Caco-2 (cell line): ENCODE measurements at regions of chr17 and their contacts with region 1.

Region 1: GRCh38 chr17:57783106-57783742 is 38.1 kb upstream of the CCDC182 start:
- DNase-seq: peak; percentile 70 to 85
- H3K4me3 ChIP-seq: no peak overlapping the region
- H3K4me3 Mint-ChIP-seq: no peak overlapping the region
- H3K27ac Mint-ChIP-seq: no peak overlapping the region
- H3K4me1 ChIP-seq: no peaks in the 10 kb centered on the region
- H3K4me1 Mint-ChIP-seq: no peaks in the 10 kb centered on the region
- H3K27me3 ChIP-seq: peaks cover 2% of the 10 kb centered on the region; the same call in 1 of the 2 replicates
- H3K27me3 Mint-ChIP-seq: peaks cover 17% of the 10 kb centered on the region
- CTCF ChIP-seq: peak; percentile 84 to 87

Region 2: DNA sequence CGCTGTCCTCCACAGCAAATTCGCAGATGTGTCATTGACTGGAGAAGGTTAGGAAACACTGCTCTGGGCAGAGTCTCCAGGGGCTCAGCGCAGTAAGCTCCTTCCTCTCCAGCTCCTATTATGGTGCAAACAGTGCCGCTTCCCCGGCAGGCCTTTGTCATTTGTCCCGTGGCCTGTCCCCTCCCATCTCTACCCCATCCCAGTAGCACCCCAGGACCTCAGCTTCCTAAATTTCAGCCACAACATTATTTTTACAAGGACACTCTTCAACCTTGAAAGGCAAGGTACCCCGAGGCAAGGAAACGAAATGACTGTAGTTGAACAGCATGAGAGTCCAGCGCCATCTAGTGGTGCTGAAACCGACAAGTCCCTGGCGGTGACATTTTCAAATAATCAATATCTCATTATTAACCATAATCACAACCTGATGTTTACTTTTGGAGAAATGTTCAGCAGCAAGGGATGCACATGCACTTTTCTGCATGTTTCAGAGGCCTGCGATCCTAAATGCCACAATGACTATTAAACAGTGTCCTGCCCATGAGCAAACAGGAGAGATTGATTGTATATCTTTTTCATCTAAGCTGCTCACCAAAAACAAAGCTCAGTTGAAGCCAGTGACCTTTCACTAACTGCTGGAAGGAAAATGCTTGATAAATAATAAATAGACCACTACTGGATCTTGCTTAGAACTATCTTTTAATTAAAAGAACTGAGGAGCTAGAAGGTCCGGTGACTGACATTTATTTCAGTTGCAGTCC is 50.1 kb after region 1 on chr17:
- CTCF ChIA-PET with region 1: interaction called, 12 read pairs
- POLR2A ChIA-PET with region 1: no interaction called
- intact Hi-C with region 1: no loop called
- DNase-seq: peak; percentile 65 to 68
- H3K4me3 ChIP-seq: no peak overlapping the region
- H3K4me3 Mint-ChIP-seq: no peak overlapping the region
- H3K27ac Mint-ChIP-seq: no peak overlapping the region
- H3K4me1 ChIP-seq: peaks cover 5% of the 10 kb centered on the region; the same call in 1 of the 2 replicates
- H3K4me1 Mint-ChIP-seq: peaks cover 6% of the 10 kb centered on the region
- H3K27me3 ChIP-seq: no peaks in the 10 kb centered on the region
- H3K27me3 Mint-ChIP-seq: no peaks in the 10 kb centered on the region
- CTCF ChIP-seq: peak; percentile 91 to 93